ENCODE measurements at regions of chr2 and their contacts with region 1.

Region 1: DNA sequence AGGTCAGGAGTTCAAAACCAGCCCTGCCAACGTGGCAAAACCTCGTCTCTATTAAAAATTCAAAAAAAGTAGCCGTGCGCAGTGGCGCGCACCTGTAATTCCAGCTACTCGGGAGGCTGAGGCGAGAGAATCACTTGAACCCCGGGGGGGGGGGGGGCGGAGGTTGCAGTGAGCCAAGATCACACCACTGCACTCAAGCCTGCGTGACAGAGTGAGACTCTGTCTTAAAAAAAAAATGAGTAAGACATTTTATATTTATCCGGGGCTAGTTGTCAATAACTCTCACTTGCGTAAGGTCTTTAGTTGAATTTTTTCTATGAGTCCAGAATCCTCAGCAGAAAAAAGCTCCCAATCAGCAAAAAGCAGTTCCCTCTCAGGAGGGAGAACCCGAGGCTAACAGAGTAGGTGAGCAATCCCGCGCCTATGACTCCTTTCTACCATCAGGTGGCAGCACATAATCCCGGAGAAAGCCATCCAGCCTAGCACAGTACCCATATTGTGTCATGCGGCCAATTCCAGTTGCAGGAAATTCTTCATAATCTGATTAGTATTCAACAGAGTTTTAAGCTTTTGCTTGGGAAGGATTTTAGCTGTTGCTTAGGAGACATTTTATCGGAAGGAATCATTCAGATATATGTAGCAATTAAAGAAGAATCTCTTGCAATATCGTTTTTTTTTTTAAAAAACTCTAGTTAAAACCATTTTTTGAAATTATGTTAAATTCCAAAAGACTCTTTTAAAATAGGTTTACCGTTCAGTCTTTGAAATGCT is 11.9 kb upstream of the CRYGA start:
- DNase-seq: peak; percentile 38
- H3K4me3 ChIP-seq: no peak overlapping the region
- H3K27ac ChIP-seq: no peak overlapping the region
- H3K27me3 ChIP-seq: no peaks in the 10 kb centered on the region
- CTCF ChIP-seq: peak; percentile 96

Region 2: GRCh38 chr2:208142240-208142924 is 32.9 kb before region 1 on chr2:
- CTCF ChIA-PET with region 1: interaction called, 15 read pairs
- POLR2A ChIA-PET with region 1: no interaction called
- DNase-seq: no peak
- H3K4me3 ChIP-seq: no peak overlapping the region
- H3K27ac ChIP-seq: no peak overlapping the region
- H3K27me3 ChIP-seq: no peaks in the 10 kb centered on the region
- CTCF ChIP-seq: no peak

Region 3: DNA sequence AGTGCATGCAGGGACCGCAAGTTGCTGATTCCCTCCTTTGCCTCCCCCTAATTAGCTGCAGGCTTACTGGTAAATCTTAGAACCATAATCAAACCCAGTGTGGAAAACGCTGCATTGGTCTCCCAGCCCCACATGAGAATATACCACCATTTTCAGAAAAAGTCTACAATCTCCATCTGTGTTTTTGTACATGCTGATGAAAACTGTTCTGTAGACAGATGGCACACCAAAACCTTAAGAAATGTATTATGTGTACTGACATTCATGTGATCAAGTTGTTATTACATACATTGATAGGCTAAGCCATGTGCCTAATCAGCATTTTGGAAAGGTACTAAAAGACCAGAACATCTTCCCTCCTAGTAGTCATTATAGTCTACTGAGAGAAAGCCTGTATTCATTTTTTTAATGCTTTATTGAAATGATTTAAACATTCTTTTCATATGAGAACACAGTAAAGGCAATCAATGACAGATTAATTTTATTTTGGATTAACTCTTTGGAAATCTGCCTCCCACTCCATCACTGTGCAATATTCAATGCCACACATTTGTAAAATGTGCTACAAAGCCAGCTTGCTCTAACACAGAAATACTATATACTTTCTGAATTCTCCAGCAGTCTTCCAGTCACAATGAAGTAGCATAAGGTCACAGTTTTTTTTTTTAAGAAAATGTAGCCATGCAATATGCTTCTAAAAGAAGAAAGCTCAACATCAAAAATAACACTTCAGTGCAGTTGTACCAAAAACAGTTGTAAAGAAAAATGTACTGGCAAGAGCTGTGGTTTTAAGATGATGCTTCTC is 10.1 kb before region 1 on chr2:
- CTCF ChIA-PET with region 1: interaction called, 33 read pairs
- POLR2A ChIA-PET with region 1: no interaction called
- DNase-seq: no peak
- H3K4me3 ChIP-seq: no peak overlapping the region
- H3K27ac ChIP-seq: no peak overlapping the region
- H3K27me3 ChIP-seq: no peaks in the 10 kb centered on the region
- CTCF ChIP-seq: no peak

Region 4: GRCh38 chr2:208208335-208209085 is 33.3 kb after region 1 on chr2:
- CTCF ChIA-PET with region 1: interaction called, 20 read pairs
- POLR2A ChIA-PET with region 1: no interaction called
- DNase-seq: no peak
- H3K4me3 ChIP-seq: no peak overlapping the region
- H3K27ac ChIP-seq: no peak overlapping the region
- H3K27me3 ChIP-seq: peaks cover 2% of the 10 kb centered on the region
- CTCF ChIP-seq: no peak

Region 5: GRCh38 chr2:208265801-208266552 is 90.7 kb after region 1 on chr2 and contains the start of gene PIKFYVE:
- CTCF ChIA-PET with region 1: interaction called, 11 read pairs
- POLR2A ChIA-PET with region 1: no interaction called
- DNase-seq: peak; percentile 91
- H3K4me3 ChIP-seq: peak within 1 kb of the TSS; percentile 91
- H3K27ac ChIP-seq: peak within 1 kb of the TSS; percentile 92
- H3K27me3 ChIP-seq: no peaks in the 10 kb centered on the region
- CTCF ChIP-seq: no peak
- polyA plus RNA-seq, gene PIKFYVE: 19.6 and 23.8 TPM in 2 replicates